Cardiac septum (tissue), 1 donor: ENCODE measurements at regions of chr20 and their contacts with region 1.

Region 1: DNA sequence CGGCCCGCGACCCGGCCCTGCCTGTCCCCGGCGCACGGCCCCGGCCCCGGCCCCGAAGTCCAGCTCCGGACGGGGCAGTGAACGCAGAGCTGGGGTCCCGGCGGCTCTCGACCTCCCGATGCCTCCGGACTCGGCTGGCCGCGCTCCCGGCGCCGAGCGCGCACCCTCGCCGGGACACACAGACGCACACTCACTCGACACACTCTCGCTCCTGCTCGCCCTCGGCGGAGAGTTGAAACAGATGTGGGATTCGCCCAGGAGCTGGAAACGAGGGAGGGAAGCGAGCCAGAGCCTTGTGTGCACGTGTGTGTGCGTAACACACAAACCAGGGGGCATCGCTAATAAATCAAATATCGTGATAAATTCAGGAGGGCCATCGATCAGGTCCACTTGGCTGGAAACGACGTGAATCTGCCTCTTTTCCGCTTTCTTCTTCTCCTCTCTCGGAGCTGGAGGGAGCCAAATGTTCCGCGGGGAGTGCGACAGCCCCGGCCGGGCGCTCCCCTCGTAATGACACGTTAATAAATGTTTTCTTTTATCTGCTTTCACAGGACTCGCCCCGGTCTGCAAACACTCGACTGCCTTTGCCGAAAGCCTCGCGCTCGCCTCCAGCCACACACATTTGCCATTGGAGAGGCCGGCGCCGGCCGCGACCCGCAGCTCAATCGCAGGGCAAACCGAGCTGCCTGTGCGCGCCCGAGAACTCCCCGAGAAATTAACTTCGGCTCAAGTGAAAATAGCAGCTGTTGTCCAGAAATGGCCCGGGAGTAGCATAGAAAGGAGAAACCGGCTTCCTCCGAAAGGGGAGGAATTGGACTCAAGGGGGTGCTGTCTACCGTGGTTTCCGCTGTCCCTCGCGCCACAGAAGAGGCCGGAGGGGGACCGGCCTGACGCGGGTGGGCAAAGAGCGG is 828 bp upstream of the SULF2 start:
- DNase-seq: peak; percentile 85

Region 2: DNA sequence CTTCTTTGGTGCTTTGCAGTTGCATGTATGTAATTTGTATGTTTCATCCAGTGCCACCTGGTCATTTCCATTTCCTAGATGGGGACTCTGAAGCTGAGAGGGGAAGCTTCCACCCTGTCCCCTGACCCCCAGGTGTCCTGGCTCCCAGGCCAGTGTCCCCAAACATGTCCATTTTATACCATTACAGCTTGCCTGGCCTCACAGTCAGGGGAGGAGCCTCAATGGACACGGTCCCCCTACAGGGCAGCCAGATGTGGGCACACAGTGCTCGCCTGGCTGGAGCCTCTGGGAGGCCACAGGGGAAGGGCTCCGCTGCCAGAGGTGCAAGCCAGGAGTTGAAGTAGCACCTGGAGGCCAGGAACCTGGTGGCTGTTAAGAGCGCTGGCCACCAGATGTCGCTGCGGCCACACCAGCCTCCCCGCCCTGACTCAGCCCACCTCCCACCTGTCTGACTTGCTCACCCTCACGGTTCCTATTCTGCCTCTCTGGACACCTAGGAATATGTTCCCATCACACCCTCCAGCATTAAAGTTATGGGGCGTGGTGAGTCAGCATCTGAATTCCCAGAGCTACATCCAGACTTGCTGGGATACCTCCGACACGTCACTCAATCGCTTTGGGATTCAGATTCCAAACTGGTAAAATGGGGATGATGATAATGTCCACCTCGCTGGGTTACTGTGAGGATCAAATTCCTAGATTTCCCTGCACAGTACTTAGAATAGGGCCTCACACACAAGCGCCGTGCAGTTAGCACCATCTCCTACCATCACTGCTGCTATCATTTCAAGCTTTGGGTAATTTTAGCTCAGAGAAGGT is 108.3 kb before region 1 on chr20:
- intact Hi-C with region 1: loop called (anchors 5 kb)
- DNase-seq: peak; percentile 80

Region 3: GRCh38 chr20:47725248-47725973 is 60.7 kb before region 1 on chr20:
- intact Hi-C with region 1: loop called (anchors 5 kb)
- DNase-seq: peak; percentile 89

Region 4: GRCh38 chr20:47809111-47809912 is 23.2 kb after region 1 on chr20:
- intact Hi-C with region 1: no loop called
- DNase-seq: peak; percentile 71

Region 5: GRCh38 chr20:47857566-47858471 is 71.7 kb after region 1 on chr20:
- intact Hi-C with region 1: no loop called
- DNase-seq: no peak

Region 6: GRCh38 chr20:47875714-47875998 is 89.5 kb after region 1 on chr20:
- intact Hi-C with region 1: no loop called
- DNase-seq: no peak

Region 7: GRCh38 chr20:48065824-48066660 is 279.9 kb after region 1 on chr20:
- intact Hi-C with region 1: no loop called
- DNase-seq: no peak

Region 8: GRCh38 chr20:48275685-48276342 is 489.7 kb after region 1 on chr20:
- intact Hi-C with region 1: loop called (anchors 10 kb)
- DNase-seq: no peak

Region 9: DNA sequence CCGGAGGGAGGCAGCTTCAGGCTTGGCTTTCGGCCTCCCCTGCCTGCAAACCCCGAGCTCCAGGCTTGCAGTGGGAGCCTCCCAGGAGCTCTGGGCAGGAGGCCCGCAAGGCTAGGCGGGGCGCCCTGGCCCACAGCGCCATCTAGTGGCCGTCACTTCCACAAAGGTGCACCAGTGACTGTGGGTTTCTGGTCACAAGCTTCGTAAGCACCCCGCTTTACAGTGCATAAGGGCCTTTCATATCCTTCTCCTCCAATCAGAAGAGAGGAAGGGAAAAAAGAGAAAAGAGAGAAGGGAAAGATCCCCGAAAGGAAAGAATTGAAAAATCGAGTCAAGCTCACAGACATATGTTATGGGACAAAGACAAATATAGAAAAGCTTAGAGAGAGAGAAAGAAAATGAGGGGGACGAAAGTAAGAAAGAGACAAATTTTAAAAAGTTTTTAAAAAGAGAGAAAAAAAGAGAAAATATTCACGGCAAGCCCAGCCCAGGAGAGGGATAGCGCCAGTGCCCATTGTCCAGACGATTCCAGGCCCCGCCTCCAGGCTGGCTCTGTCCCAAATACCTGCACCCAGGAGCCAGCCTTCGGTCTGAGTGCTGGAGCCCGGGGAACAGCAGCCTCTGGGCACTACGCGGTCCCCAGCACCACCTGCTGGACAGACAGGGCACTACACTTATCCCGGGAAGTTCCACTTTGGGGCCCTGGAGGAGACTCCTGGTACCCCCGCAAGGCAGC is 834.6 kb after region 1 on chr20:
- intact Hi-C with region 1: loop called (anchors 1 kb)
- DNase-seq: peak; percentile 91